ENCODE measurements at regions of chr21 and their contacts with region 1.

Region 1: DNA sequence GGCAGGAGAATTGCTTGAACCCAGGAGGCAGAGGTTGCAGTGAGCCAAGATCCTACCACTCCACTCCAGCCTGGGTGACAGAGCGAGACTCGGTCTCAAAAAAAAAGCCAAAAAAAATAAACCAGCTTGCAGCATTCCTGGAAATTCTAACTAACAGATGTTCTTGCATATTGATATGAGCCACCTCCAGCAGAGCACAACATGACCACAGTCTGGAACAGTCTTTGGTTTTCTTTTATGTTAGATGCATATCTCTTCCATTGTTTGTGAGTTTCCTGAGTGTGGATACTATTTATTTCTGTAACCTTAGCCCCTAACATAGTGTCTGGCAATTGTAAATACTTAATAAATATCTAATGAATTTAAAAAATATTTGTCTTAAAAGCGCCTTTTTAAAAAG is 23.9 kb downstream of the IFNAR1 start:
- DNase-seq: no peak
- ATAC-seq: no peak
- H3K4me3 ChIP-seq: no peak overlapping the region
- H3K4me3 Mint-ChIP-seq: no peak overlapping the region
- H3K27ac ChIP-seq: no peak overlapping the region
- H3K27ac Mint-ChIP-seq: no peak overlapping the region
- H3K4me1 ChIP-seq: no peaks in the 10 kb centered on the region
- H3K4me1 Mint-ChIP-seq: no peaks in the 10 kb centered on the region
- H3K27me3 ChIP-seq: no peaks in the 10 kb centered on the region
- H3K27me3 Mint-ChIP-seq: no peaks in the 10 kb centered on the region
- CTCF ChIP-seq: no peak

Region 2: GRCh38 chr21:33157303-33157702 is 191.4 kb before region 1 on chr21:
- intact Hi-C with region 1: no loop called
- DNase-seq: no peak
- ATAC-seq: no peak
- H3K4me3 ChIP-seq: no peak overlapping the region
- H3K4me3 Mint-ChIP-seq: no peak overlapping the region
- H3K27ac ChIP-seq: no peak overlapping the region
- H3K27ac Mint-ChIP-seq: no peak overlapping the region
- H3K4me1 ChIP-seq: no peaks in the 10 kb centered on the region
- H3K4me1 Mint-ChIP-seq: peaks cover 0 to 1% of the 10 kb centered on the region in 2 donors
- H3K27me3 ChIP-seq: peaks cover 10% of the 10 kb centered on the region
- H3K27me3 Mint-ChIP-seq: peaks cover 40 to 68% of the 10 kb centered on the region in 2 donors
- CTCF ChIP-seq: no peak

Region 3: DNA sequence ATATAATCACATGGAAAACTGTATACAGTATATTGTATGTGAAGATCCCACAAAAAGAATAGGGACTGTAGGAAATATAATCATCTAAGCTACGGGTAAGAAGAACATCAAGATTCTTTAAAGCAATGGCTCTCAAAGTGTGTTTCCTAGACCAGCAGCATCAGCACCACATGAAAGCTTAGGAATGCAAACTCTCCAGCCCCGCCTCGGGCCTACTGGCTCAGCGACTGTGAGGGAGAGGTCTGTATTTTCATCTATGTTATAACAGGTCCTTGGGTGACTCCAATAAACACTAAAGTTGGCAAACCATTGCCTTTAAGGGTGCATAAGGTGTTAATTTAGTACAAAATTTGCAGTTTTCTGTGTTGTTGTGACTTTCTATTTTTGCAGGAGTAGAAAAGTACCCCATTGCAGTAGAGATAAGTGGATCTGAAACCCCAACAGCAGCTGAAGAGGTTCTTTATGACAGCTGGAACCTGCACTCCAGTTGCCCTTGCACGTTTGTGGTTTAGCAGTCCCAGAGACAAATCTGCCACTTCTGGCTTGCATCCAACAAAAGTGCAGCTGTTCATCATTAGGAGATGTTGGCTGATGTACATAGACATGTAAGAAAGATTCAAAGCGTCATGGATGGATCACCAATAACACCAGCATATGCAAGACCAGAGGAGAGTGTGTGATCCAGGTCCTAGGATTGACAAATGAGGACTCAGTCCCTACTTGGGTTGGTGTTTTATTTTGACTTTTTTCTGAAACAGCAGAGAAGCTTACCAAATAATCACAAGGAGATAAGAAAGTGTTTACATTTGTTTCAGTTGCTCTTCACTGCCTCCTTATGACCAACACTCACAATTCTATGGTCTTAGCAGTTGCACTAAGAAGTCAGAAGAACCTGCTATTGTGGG is 39.9 kb before region 1 on chr21:
- intact Hi-C with region 1: no loop called
- DNase-seq: peak in 1 of 2 donors; percentile 56
- ATAC-seq: no peak
- H3K4me3 ChIP-seq: no peak overlapping the region
- H3K4me3 Mint-ChIP-seq: no peak overlapping the region
- H3K27ac ChIP-seq: no peak overlapping the region
- H3K27ac Mint-ChIP-seq: no peak overlapping the region
- H3K4me1 ChIP-seq: peaks cover 4% of the 10 kb centered on the region
- H3K4me1 Mint-ChIP-seq: peaks cover 6% of the 10 kb centered on the region in 2 donors
- H3K27me3 ChIP-seq: no peaks in the 10 kb centered on the region
- H3K27me3 Mint-ChIP-seq: no peaks in the 10 kb centered on the region
- CTCF ChIP-seq: no peak

Region 4: DNA sequence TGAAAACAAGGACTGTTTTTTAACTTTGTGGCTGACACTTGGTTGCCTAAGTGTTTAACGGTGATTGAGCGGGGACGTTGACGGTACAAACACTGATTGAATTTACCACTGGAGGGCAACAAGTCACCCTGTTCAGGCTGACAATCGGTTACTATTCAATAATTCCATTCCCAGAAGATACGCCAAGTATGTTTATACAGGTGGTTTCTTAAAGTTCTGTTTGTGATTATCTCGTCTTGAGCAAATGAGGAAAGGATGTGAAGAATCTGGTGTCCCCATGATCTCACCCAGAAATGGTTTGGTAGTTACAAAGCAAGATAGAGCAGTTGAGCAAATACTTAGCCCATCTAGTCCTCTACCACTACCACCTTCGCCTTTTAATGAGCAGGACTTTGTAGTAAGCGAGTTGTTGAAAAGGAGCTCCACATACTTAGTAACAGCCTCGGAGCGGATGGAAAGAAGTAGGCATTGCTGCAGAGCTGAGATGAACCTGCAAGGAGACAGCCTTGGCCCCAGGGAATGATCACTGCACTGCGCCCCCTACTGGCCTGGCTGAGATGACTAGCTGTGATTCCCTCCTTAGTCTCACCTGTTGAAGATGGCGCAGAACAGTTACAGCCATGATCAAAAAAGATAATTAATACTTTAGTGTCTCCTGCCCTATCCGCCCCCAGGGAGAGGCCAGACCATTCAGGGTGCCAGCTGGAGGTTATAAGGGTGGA is 12.3 kb after region 1 on chr21:
- intact Hi-C with region 1: no loop called
- DNase-seq: peak; percentile 74 to 93
- ATAC-seq: peak; percentile 72 to 83 (median 75)
- H3K4me3 ChIP-seq: peak overlapping the region; percentile 26
- H3K4me3 Mint-ChIP-seq: peak overlapping the region; percentile 82
- H3K27ac ChIP-seq: no peak overlapping the region
- H3K27ac Mint-ChIP-seq: peak overlapping the region; percentile 67 to 81
- H3K4me1 ChIP-seq: peaks cover 15% of the 10 kb centered on the region
- H3K4me1 Mint-ChIP-seq: peaks cover 15 to 18% of the 10 kb centered on the region in 2 donors
- H3K27me3 ChIP-seq: no peaks in the 10 kb centered on the region
- H3K27me3 Mint-ChIP-seq: peaks cover 12 to 15% of the 10 kb centered on the region in 2 donors
- CTCF ChIP-seq: peak; percentile 92

Region 5: GRCh38 chr21:33441489-33442477 is 93.1 kb after region 1 on chr21:
- intact Hi-C with region 1: loop called (anchors 1 kb)
- DNase-seq: no peak
- ATAC-seq: no peak
- H3K4me3 ChIP-seq: no peak overlapping the region
- H3K4me3 Mint-ChIP-seq: no peak overlapping the region
- H3K27ac ChIP-seq: peak overlapping the region; percentile 61
- H3K27ac Mint-ChIP-seq: no peak overlapping the region
- H3K4me1 ChIP-seq: peaks cover 10% of the 10 kb centered on the region
- H3K4me1 Mint-ChIP-seq: no peaks in the 10 kb centered on the region
- H3K27me3 ChIP-seq: no peaks in the 10 kb centered on the region
- H3K27me3 Mint-ChIP-seq: no peaks in the 10 kb centered on the region
- CTCF ChIP-seq: no peak

Region 6: DNA sequence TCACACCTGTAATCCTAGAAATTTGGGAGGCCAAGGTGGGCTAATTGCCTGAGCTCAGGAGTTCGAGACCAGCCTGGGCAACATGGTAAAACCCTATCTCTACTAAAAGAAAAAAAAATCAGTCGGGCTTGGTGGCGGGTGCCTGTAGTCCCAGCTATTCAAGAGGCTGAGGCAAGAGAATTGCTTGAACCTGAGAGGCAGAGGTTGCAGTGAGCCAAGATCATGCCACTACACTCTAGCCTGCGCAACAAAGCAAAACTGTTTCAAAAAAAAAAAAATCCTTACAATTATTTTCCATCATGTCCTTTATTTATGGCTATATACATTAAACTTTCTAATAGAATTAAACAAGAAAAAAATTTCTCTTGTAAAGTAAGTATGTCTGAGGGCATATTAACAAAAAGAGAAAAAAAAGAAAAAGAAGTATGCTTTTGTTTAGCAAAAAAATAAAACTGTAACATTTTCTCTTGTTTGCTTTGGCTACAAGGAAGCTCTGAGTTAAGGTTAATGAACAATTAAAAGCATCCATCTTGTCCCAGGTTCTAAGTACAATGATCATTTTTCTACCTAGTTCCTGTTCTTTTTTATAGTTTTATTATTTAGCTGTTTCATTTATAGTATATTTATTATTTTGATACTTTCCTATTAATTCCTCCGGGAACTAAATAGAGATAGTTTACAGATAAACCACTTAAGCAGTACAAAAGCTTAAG is 113.0 kb after region 1 on chr21:
- intact Hi-C with region 1: no loop called
- DNase-seq: no peak
- ATAC-seq: no peak
- H3K4me3 ChIP-seq: no peak overlapping the region
- H3K4me3 Mint-ChIP-seq: no peak overlapping the region
- H3K27ac ChIP-seq: no peak overlapping the region
- H3K27ac Mint-ChIP-seq: no peak overlapping the region
- H3K4me1 ChIP-seq: no peaks in the 10 kb centered on the region
- H3K4me1 Mint-ChIP-seq: no peaks in the 10 kb centered on the region
- H3K27me3 ChIP-seq: no peaks in the 10 kb centered on the region
- H3K27me3 Mint-ChIP-seq: no peaks in the 10 kb centered on the region
- CTCF ChIP-seq: no peak

Measured in natural killer cell (primary cell).